Activated CD4-positive, alpha-beta memory T cell treated with anti-CD3 and anti-CD28 coated beads for 36 hours (primary cell): ENCODE measurements at regions of chr22 and their contacts with region 1.

Region 1: GRCh38 chr22:17217179-17217578 is 2.1 kb downstream of the ADA2 start:
- DNase-seq: peak; percentile 18
- H3K4me3 Mint-ChIP-seq: peak overlapping the region; percentile 49
- H3K27ac Mint-ChIP-seq: peak overlapping the region; percentile 39
- H3K4me1 Mint-ChIP-seq: peaks cover 67% of the 10 kb centered on the region
- H3K27me3 Mint-ChIP-seq: no peaks in the 10 kb centered on the region

Region 2: DNA sequence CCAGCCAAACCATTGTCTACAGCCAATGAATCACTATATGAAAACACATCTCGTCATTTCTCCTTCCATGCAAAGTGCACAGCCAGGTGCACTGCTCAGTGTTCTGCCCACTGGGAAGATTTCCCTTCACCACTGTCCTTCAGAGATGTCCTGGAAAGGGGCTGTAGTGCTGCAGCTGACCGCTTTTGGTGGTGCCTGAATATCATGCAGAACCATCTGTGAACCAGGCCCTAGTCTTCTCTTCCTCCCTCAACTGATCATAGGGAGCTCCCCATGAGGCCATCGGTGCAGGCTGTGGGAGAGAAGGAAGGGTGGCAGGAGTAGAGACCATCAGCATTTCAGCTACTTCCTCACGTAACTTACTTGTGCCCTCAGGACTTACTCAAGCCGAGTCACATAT is 279.4 kb before region 1 on chr22:
- CTCF ChIA-PET with region 1: no interaction called
- POLR2A ChIA-PET with region 1: no interaction called
- intact Hi-C with region 1: no loop called
- DNase-seq: no peak
- H3K4me3 Mint-ChIP-seq: no peak overlapping the region
- H3K27ac Mint-ChIP-seq: no peak overlapping the region
- H3K4me1 Mint-ChIP-seq: no peaks in the 10 kb centered on the region
- H3K27me3 Mint-ChIP-seq: peaks cover 19% of the 10 kb centered on the region

Region 3: GRCh38 chr22:17084554-17085276 is 132.5 kb before region 1 on chr22 and contains the start of gene IL17RA:
- CTCF ChIA-PET with region 1: no interaction called
- POLR2A ChIA-PET with region 1: interaction called, 3 read pairs
- intact Hi-C with region 1: loop called (anchors 5 kb)
- DNase-seq: peak; percentile 96
- H3K4me3 Mint-ChIP-seq: peak within 1 kb of the TSS; percentile 79
- H3K27ac Mint-ChIP-seq: peak within 1 kb of the TSS; percentile 84
- H3K4me1 Mint-ChIP-seq: peaks cover 45% of the 10 kb centered on the region
- H3K27me3 Mint-ChIP-seq: no peaks in the 10 kb centered on the region
- total RNA-seq, gene IL17RA: 12.5 to 14.7 TPM

Region 4: DNA sequence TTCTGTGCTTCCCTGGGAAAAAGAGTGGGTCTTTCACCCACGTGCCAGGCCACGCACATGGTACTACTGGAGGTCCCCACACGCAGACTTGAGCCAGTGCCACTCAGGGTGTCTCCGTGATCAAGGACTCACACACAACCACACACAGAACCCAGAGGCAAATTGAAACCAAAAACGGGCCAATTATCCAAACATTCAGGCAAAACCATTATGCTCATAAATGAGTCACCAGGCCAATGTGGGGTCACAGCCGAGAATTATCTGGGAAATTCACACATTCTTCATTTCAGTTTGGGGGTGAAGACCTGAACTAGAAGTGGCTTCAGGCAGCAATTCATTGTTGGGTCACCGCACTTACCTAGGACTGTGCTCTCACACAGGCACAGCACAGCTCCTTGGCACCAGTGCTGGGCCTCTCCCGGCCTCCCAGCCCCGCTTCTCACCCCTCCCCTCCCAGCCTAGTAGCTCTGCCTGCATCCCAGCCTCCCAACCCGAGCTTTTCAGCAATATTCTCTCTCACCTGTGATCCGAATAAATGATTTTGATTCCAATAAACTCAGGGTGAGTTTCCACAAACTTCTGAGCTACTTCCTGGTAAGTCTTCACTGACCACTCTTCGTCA is 25.9 kb before region 1 on chr22:
- CTCF ChIA-PET with region 1: no interaction called
- POLR2A ChIA-PET with region 1: no interaction called
- intact Hi-C with region 1: no loop called
- DNase-seq: no peak
- H3K4me3 Mint-ChIP-seq: no peak overlapping the region
- H3K27ac Mint-ChIP-seq: no peak overlapping the region
- H3K4me1 Mint-ChIP-seq: no peaks in the 10 kb centered on the region
- H3K27me3 Mint-ChIP-seq: no peaks in the 10 kb centered on the region

Region 5: DNA sequence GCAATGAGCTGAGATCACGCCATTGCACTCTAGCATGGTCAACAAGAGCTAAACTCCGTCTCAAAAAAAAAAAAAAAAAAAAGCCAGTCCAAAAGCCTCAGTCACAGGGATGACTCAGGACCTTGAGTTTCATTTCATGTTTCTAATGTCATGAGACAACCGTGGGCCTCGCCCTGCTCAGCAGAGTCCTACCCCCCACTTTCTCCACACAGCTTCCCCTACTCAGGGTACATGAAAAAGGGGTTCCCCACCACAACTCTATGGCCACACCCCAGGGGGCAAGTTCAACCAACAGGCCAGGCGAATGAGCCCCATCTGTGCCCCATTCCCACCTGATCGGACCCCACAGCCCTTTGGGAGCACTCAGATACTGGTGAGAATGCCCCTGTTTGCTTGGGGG is 26.3 kb after region 1 on chr22:
- CTCF ChIA-PET with region 1: no interaction called
- POLR2A ChIA-PET with region 1: no interaction called
- intact Hi-C with region 1: loop called (anchors 1 kb)
- DNase-seq: peak; percentile 53
- H3K4me3 Mint-ChIP-seq: no peak overlapping the region
- H3K27ac Mint-ChIP-seq: peak overlapping the region; percentile 74
- H3K4me1 Mint-ChIP-seq: peaks cover 8% of the 10 kb centered on the region
- H3K27me3 Mint-ChIP-seq: no peaks in the 10 kb centered on the region

Region 6: GRCh38 chr22:17258015-17258787 is 41.0 kb after region 1 on chr22:
- CTCF ChIA-PET with region 1: interaction called, 3 read pairs
- POLR2A ChIA-PET with region 1: no interaction called
- intact Hi-C with region 1: loop called (anchors 1 kb)
- DNase-seq: peak; percentile 84
- H3K4me3 Mint-ChIP-seq: no peak overlapping the region
- H3K27ac Mint-ChIP-seq: peak overlapping the region; percentile 45
- H3K4me1 Mint-ChIP-seq: peaks cover 19% of the 10 kb centered on the region
- H3K27me3 Mint-ChIP-seq: no peaks in the 10 kb centered on the region

Region 7: GRCh38 chr22:17281440-17281841 is 64.3 kb after region 1 on chr22:
- CTCF ChIA-PET with region 1: no interaction called
- POLR2A ChIA-PET with region 1: interaction called, 3 read pairs
- intact Hi-C with region 1: loop called (anchors 1 kb)
- DNase-seq: peak; percentile 34
- H3K4me3 Mint-ChIP-seq: peak overlapping the region; percentile 27
- H3K27ac Mint-ChIP-seq: peak overlapping the region; percentile 81
- H3K4me1 Mint-ChIP-seq: peaks cover 16% of the 10 kb centered on the region
- H3K27me3 Mint-ChIP-seq: no peaks in the 10 kb centered on the region

Region 8: DNA sequence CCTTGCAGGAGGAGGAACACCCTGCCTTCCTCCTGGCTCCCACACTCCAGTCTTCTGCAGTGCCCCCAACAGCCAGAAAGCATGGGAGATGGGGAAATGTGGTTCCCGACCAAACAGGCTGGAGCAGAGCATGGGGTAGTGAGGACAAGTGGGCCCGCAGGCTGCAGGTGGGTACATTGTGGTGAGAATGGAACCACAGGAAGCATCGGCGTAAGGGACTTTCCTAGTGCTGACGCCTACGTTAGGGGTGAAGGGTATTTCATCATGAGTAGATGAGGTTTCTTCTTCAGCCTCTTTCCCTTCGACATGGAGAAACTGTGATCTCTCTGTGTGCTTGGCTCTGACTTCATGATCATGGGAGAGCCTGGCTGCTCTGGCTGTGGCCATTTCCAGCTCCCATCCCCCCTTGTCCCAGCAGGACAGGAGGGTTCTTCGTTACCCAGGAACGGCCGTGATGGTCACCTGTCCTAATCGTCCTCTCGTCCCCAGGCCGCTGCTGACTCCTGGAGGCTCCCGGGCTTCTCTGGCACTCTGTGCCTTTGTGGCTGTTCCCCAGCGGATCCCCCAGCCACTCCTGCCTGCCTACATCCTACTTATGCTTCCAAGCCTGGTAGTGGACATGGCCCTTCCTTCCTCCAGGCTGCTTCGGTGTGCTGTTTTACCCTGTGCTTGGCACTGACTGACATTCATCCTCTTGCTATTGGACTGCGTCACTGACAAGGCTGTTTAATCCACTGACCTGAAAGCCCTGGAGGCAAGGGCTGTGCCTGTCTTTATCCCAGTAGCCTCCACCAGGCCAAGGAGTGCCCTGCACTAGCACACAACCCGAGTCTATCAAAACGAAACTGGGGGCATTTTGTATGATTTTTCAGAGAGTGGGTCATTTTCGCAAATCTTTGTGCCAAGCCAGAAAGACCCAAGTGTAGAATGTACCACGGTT is 86.9 kb after region 1 on chr22:
- CTCF ChIA-PET with region 1: no interaction called
- POLR2A ChIA-PET with region 1: no interaction called
- intact Hi-C with region 1: loop called (anchors 5 kb)
- DNase-seq: peak; percentile 78
- H3K4me3 Mint-ChIP-seq: no peak overlapping the region
- H3K27ac Mint-ChIP-seq: peak overlapping the region; percentile 19
- H3K4me1 Mint-ChIP-seq: peaks cover 20% of the 10 kb centered on the region
- H3K27me3 Mint-ChIP-seq: no peaks in the 10 kb centered on the region

Region 9: DNA sequence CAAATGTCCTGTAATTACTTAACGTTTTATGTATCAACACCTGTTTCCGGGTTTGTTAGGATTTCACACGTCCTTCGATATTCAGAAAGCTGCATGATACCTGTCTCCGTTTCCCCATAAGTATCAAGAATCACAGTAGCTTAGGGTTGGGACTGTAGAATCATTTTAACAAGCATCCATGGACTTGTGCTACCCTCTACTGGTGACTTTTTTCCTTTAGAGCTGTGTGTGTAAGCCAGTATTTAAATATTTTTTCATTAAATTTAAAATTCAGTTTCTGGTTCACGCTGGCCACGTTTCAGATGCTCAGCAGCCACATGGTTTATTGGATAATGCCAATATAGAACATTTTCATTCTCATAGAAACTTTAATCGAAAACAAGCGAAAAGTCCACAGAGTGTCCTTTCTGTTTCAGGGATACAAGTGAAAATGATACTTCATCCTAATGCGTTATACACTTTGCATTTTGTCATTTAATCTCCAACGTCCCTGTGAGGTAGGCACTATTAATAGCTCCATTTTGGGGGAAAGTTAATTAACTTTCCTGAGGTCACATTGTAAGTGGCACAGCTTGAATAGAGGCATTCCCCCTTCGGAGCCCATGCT is 284.6 kb after region 1 on chr22:
- CTCF ChIA-PET with region 1: interaction called, 7 read pairs
- POLR2A ChIA-PET with region 1: no interaction called
- intact Hi-C with region 1: loop called (anchors 5 kb)
- DNase-seq: no peak
- H3K4me3 Mint-ChIP-seq: no peak overlapping the region
- H3K27ac Mint-ChIP-seq: no peak overlapping the region
- H3K4me1 Mint-ChIP-seq: no peaks in the 10 kb centered on the region
- H3K27me3 Mint-ChIP-seq: peaks cover 6% of the 10 kb centered on the region